Adrenal gland (tissue), 19 donors: ENCODE measurements at regions of chr1 and their contacts with region 1.

Region 1: DNA sequence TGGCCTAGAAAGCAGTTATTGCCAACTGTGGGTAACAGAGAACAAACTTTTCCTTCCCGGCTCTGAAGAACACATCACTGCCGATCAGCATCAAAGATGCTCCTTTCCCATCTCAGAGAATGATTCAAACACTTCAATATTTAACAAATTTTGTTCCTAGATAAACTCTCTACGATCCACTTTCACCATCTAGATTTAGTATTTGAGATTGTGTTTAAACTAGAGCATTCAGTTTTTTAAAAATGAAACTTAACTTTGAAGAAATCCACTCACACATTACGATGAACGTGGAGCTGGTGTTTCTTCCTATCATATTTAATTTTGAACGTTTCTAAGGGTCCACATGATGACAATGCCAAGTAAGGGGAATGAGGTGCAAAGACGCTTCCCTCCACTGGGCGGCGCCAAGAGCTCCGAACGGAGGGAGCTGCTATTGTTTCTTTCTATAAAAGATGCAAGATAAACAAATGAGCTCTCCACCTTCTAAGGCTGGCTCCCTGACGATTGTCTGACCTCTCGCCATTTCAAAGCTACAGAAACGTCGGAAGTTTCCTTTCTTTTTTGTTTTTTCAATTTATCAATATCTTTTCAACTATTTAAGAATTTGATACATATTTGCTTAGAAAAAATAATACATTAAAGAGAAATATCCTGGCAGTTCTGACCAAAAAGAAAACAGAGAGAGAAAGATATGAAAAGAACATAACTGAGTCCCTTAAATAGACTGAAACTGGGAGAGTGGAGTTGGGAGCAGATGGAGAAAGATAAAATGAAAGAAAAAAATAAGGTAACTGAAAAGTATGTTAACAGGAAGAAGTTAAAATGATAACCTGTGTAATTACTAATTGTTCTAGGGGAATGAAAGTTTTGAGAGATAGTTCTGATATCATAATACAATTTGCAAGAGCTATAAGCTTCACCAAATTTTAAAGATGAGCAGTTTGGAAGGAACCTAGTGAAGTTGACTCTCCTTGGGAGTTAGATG is 4.4 kb upstream of the BARHL2 start:
- DNase-seq: peak in 5 of 7 donors; percentile 37 to 67 (median 56)
- H3K4me3 ChIP-seq: no peak overlapping the region
- H3K27ac ChIP-seq: no peak overlapping the region
- H3K4me1 ChIP-seq: peaks cover 20 to 38% of the 10 kb centered on the region in 2 donors
- H3K27me3 ChIP-seq: peaks cover 98% of the 10 kb centered on the region
- CTCF ChIP-seq: peak; percentile 43 to 79 (median 68)
- POLR2A ChIP-seq: no peak

Region 2: GRCh38 chr1:90841473-90841872 is 120.0 kb after region 1 on chr1:
- intact Hi-C with region 1: loop called in 1 of 2 experiments (anchors 10 kb)
- DNase-seq: no peak
- H3K4me3 ChIP-seq: no peak overlapping the region
- H3K27ac ChIP-seq: no peak overlapping the region
- H3K4me1 ChIP-seq: peaks cover 0 to under 1% of the 10 kb centered on the region in 2 donors
- H3K27me3 ChIP-seq: peaks cover 14% of the 10 kb centered on the region
- CTCF ChIP-seq: no peak
- POLR2A ChIP-seq: no peak

Region 3: GRCh38 chr1:90964444-90965035 is 243.0 kb after region 1 on chr1:
- intact Hi-C with region 1: loop called (anchors 10 kb)
- DNase-seq: no peak
- H3K4me3 ChIP-seq: no peak overlapping the region
- H3K27ac ChIP-seq: no peak overlapping the region
- H3K4me1 ChIP-seq: peaks cover 9 to 17% of the 10 kb centered on the region in 2 donors
- H3K27me3 ChIP-seq: no peaks in the 10 kb centered on the region
- CTCF ChIP-seq: peak in 5 of 6 experiments; percentile 21 to 49 (median 47)
- POLR2A ChIP-seq: no peak

Region 4: GRCh38 chr1:91165033-91165654 is 443.6 kb after region 1 on chr1:
- intact Hi-C with region 1: loop called in 1 of 2 experiments (anchors 10 kb)
- DNase-seq: peak; percentile 59 to 88 (median 78)
- H3K4me3 ChIP-seq: no peak overlapping the region
- H3K27ac ChIP-seq: no peak overlapping the region
- H3K4me1 ChIP-seq: no peaks in the 10 kb centered on the region
- H3K27me3 ChIP-seq: no peaks in the 10 kb centered on the region
- CTCF ChIP-seq: peak; percentile 69 to 89 (median 82)
- POLR2A ChIP-seq: no peak